Activated CD8-positive, alpha-beta memory T cell treated with anti-CD3 and anti-CD28 coated beads, Interleukin-2, amount 10 ng/mL, durations not matched to agents 7 days and 5 days (primary cell): ENCODE measurements at regions of chr11 and their contacts with region 1.

Region 1: GRCh38 chr11:18243783-18244362 is 4.6 kb downstream of the SAA2 start:
- DNase-seq: peak; percentile 82
- ATAC-seq: peak; percentile 28
- H3K4me3 Mint-ChIP-seq: no peak overlapping the region
- H3K27ac Mint-ChIP-seq: no peak overlapping the region
- H3K4me1 Mint-ChIP-seq: peaks cover 37% of the 10 kb centered on the region
- H3K27me3 Mint-ChIP-seq: peaks cover 31% of the 10 kb centered on the region

Region 2: GRCh38 chr11:17906436-17906835 is 337.4 kb before region 1 on chr11:
- CTCF ChIA-PET with region 1: no interaction called
- DNase-seq: no peak
- ATAC-seq: no peak
- H3K4me3 Mint-ChIP-seq: no peak overlapping the region
- H3K27ac Mint-ChIP-seq: no peak overlapping the region
- H3K4me1 Mint-ChIP-seq: no peaks in the 10 kb centered on the region
- H3K27me3 Mint-ChIP-seq: no peaks in the 10 kb centered on the region

Region 3: DNA sequence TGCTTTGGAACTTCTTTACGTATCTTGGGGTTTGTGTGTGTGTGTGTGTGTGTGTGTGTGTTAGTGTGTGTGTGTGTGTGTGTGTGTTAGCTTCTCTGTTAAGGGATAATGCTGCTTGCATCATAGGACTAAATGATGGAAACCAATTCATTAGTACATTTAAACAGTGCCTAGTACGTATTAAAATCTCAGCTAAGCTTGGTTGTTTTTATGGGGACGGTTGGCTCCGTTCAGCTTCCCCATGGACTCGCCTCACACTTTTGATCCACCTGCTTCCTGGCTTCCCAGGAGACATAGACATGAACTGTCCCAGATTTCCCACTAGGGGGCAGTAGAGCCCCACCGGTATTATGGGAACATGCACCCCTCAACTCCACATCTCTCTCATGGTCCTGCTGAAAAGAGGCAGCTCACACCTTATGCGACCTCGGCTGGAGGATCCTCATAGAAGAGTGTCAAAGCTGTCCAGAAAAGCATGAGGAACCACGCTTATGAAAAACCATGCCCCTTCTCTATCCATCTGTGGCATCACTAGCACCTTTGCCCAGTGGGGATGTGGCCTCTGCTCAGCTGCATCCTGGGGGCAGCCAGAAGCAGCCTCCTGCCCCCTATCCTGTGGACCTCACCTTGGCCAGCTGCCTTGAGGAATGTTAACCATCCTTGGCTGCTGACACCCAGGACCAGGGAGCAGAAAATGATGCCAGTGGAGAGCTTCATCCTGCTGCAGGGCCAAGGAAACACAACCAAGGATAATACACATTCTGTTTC is 128.3 kb before region 1 on chr11:
- CTCF ChIA-PET with region 1: interaction called, 12 read pairs
- DNase-seq: peak; percentile 77
- ATAC-seq: peak; percentile 95
- H3K4me3 Mint-ChIP-seq: no peak overlapping the region
- H3K27ac Mint-ChIP-seq: no peak overlapping the region
- H3K4me1 Mint-ChIP-seq: peaks cover 4% of the 10 kb centered on the region
- H3K27me3 Mint-ChIP-seq: peaks cover 27% of the 10 kb centered on the region

Region 4: DNA sequence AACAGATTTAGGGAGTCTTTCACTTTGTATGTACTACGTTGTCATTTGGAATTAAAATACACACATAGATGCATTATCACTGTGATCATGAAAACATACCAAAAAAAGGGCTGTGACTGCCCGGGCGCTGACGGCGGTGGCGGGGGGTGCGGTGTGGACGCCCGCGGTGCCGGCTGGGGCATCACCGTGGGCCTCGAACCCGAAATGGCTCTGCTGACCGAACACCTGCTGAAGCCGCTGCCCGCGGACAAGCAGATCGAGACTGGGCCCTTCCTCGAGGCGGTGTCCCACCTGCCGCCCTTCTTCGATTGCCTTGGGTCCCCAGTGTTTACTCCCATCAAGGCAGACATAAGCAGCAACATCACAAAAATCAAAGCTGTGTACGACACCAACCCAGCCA is 55.1 kb before region 1 on chr11:
- CTCF ChIA-PET with region 1: no interaction called
- DNase-seq: no peak
- ATAC-seq: no peak
- H3K4me3 Mint-ChIP-seq: no peak overlapping the region
- H3K27ac Mint-ChIP-seq: no peak overlapping the region
- H3K4me1 Mint-ChIP-seq: no peaks in the 10 kb centered on the region
- H3K27me3 Mint-ChIP-seq: peaks cover 51% of the 10 kb centered on the region

Region 5: DNA sequence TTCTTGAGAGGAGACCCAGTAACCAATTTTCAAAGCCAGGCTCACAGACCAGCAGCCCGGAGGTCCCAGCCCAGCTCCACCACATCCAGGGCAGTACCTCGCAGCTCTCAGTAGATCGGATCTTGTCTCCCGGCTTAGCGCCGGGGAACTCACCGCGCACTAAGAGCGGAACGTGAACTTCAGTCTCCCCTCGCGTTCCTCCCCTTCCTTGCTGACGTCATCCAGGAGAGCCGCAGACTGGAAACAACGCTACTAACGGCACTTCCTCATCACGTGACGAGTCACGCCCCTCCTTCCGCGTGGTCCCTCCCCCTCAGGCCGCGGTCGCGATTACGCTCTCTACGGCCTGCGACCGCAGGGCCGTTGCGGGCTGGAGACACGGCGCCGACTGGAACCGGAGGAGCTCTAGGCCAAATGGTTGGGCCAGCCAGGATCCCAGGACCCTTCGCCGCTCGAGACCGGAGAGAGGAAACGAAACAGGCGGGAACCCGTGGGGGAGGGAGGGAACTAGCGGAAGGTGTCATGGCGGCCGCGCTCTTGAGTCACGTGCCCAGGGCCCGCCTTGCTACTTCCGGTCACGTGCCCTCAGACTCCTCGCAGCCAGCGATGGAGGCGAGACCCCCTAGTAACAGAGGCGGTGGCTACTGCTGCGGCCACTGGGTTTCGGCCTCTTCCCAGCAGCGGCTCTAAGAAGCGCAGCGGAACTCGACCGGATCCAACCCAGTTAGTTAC is 78.3 kb after region 1 on chr11 and contains the starts of genes GTF2H1 and HPS5:
- CTCF ChIA-PET with region 1: interaction called, 19 read pairs
- DNase-seq: peak; percentile 99
- ATAC-seq: peak; percentile 88
- H3K4me3 Mint-ChIP-seq: peak within 1 kb of the TSS; percentile 97
- H3K27ac Mint-ChIP-seq: peak within 1 kb of the TSS; percentile 100
- H3K4me1 Mint-ChIP-seq: peaks cover 66% of the 10 kb centered on the region
- H3K27me3 Mint-ChIP-seq: no peaks in the 10 kb centered on the region
- total RNA-seq, gene GTF2H1: 40.0 to 47.7 TPM
- total RNA-seq, gene HPS5: 19.3 to 19.8 TPM

Region 6: GRCh38 chr11:18395735-18396504 is 152.0 kb after region 1 on chr11:
- CTCF ChIA-PET with region 1: interaction called, 36 read pairs
- DNase-seq: peak; percentile 97
- ATAC-seq: peak; percentile 70
- H3K4me3 Mint-ChIP-seq: peak overlapping the region; percentile 99
- H3K27ac Mint-ChIP-seq: peak overlapping the region; percentile 98
- H3K4me1 Mint-ChIP-seq: peaks cover 60% of the 10 kb centered on the region
- H3K27me3 Mint-ChIP-seq: no peaks in the 10 kb centered on the region

Region 7: GRCh38 chr11:18611196-18611595 is 367.3 kb after region 1 on chr11:
- CTCF ChIA-PET with region 1: no interaction called
- DNase-seq: no peak
- ATAC-seq: no peak
- H3K4me3 Mint-ChIP-seq: no peak overlapping the region
- H3K27ac Mint-ChIP-seq: no peak overlapping the region
- H3K4me1 Mint-ChIP-seq: peaks cover 11% of the 10 kb centered on the region
- H3K27me3 Mint-ChIP-seq: no peaks in the 10 kb centered on the region

Region 8: DNA sequence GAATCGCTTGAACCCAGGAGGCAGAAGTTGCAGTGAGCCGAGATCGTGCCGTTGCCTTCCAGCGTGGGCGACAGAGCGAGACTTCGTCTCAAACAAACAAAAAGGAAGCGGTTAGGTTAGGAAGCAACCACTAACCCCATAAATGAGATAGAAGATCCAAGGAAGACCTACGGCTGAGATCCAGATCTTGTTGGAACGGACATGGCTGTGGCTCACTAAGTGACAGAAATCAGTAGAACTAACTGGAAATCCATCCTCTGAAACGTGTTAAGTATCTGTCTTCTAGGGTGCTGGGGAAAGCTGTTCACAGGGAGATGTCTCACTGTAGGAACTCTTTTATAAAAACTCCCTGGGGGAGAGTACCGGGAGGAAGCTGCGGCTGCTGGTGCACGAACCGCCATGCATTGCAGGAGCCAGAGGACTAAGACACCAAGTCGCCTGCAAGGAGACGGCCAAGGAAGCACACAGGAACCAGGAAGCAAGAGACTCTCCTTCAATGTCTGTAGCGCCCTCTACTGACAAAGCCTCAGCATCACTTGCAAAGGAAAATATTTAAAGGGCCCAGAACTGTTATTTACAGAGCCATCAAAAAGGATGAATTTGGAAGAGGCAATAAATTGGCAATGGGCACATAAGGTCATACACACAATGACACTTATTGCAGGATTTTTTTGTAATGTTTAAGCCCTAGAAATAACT is 407.1 kb after region 1 on chr11:
- CTCF ChIA-PET with region 1: interaction called, 13 read pairs
- DNase-seq: peak; percentile 67
- ATAC-seq: peak; percentile 83
- H3K4me3 Mint-ChIP-seq: no peak overlapping the region
- H3K27ac Mint-ChIP-seq: peak overlapping the region; percentile 65
- H3K4me1 Mint-ChIP-seq: peaks cover 12% of the 10 kb centered on the region
- H3K27me3 Mint-ChIP-seq: no peaks in the 10 kb centered on the region